Heart right ventricle (tissue), 16 donors: ENCODE measurements at regions of chr5 and their contacts with region 1.

Region 1: GRCh38 chr5:113606298-113607134 is 93.0 kb downstream of the YTHDC2 start:
- DNase-seq: peak in 1 of 2 donors; percentile 53
- ATAC-seq: peak; percentile 85 to 93 (median 90)
- H3K4me3 ChIP-seq: peak overlapping the region in 3 of 10 donors; percentile 4 to 28 (median 7)
- H3K27ac ChIP-seq: no peak overlapping the region
- H3K4me1 ChIP-seq: peaks cover 0 to 10% (median 3%) of the 10 kb centered on the region in 9 donors
- H3K27me3 ChIP-seq: peaks cover 0 to 6% (median 0%) of the 10 kb centered on the region in 7 donors
- CTCF ChIP-seq: peak; percentile 53 to 85 (median 76)

Region 2: DNA sequence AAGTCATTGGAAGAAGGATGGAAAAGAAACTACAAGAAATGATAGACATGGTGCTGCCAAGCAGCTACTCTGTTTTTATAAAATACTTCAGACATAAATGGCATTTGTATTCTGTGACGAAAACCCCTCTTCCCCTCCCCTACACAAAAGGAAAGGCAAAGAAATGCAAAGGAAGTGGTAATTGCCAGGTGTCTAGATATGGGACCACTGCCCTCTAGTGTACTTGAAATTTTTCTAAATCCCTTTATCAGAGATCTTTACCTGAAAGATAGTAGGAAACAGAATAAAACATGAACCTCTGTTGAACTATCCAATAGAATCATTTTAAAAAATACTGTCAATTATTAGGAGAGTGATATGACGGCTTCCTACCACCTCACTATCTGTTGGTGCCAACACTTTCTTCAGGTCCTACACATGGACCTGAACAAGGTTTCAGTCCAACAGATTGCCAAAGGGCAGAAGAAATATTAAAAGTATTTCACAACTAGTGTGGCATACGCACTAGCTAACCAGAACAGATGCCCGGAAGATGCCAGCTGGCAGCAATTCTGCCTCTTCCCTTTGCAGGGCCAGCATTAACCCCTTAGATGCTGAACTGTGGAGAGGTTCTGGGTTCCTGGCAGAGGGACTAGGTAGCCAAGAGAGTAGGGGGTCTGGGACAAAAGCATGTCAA is 275.8 kb before region 1 on chr5:
- intact Hi-C with region 1: loop called in 6 of 10 experiments (anchors 5 to 10 kb)
- DNase-seq: peak; percentile 31 to 34
- ATAC-seq: peak; percentile 66 to 92 (median 74)
- H3K4me3 ChIP-seq: no peak overlapping the region
- H3K27ac ChIP-seq: peak overlapping the region in 1 of 10 donors; percentile 35
- H3K4me1 ChIP-seq: peaks cover 0 to 15% (median 9%) of the 10 kb centered on the region in 9 donors
- H3K27me3 ChIP-seq: no peaks in the 10 kb centered on the region
- CTCF ChIP-seq: peak; percentile 37 to 71 (median 51)

Region 3: GRCh38 chr5:113336975-113337374 is 269.5 kb before region 1 on chr5:
- intact Hi-C with region 1: loop called in 8 of 10 experiments (anchors 5 to 10 kb)
- DNase-seq: peak; percentile 20 to 54
- ATAC-seq: peak; percentile 74 to 90 (median 88)
- H3K4me3 ChIP-seq: no peak overlapping the region
- H3K27ac ChIP-seq: no peak overlapping the region
- H3K4me1 ChIP-seq: peaks cover 0 to 17% (median 0%) of the 10 kb centered on the region in 9 donors
- H3K27me3 ChIP-seq: no peaks in the 10 kb centered on the region
- CTCF ChIP-seq: peak; percentile 24 to 72 (median 61)

Region 4: DNA sequence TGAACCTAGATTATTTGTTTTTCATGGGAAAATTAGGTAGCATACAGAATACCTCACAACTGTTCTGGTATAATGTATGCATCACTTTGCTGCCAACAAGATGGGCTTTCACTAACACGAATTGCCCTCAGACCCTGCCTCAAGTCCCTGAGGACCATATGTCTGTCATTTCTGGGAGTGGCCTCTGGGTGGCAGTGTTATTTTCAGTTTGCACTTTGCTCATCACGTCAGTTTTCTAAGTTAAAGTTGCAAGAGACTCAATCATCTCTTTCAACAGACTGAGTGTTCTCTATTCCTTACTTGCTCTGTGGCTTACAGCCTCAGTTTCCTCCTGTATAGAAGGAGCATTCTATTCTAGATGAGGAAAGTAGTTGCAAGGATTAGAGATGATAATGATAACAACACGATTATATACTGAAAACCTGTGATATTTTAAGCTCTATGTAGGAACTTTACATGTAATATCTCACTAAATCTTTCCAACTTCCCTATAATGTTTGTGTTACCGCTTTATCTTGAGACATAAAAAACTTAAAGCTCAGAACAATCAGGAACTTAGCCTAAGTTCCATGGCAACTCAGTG is 227.5 kb before region 1 on chr5:
- intact Hi-C with region 1: loop called in 3 of 10 experiments (anchors 2 to 10 kb)
- DNase-seq: peak in 1 of 2 donors; percentile 57
- ATAC-seq: peak in 3 of 8 donors; percentile 46 to 71 (median 52)
- H3K4me3 ChIP-seq: no peak overlapping the region
- H3K27ac ChIP-seq: no peak overlapping the region
- H3K4me1 ChIP-seq: peaks cover 0 to 30% (median 0%) of the 10 kb centered on the region in 9 donors
- H3K27me3 ChIP-seq: peaks cover 0 to 29% (median 0%) of the 10 kb centered on the region in 7 donors
- CTCF ChIP-seq: peak; percentile 45 to 84 (median 76)

Region 5: DNA sequence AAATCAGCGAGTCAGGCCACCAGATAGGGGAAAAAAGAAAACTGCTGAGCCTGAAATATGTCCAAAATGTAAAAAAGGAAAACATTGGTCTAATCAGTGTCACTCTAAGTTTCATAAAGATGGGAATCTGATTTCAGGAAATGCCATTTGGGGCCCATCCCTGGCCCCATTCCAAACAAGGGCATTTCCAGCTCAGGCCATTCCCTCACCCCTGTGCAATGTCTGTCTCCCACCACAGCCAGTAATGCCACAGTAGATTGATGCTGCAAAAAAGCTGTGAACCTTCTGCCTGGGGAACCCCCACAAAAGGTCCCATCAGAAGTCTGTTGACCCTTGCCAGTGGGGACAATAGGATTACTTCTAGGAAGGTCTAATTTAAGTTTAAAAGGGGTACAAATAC is 106.5 kb after region 1 on chr5:
- intact Hi-C with region 1: no loop called
- DNase-seq: no peak
- ATAC-seq: no peak
- H3K4me3 ChIP-seq: no peak overlapping the region
- H3K27ac ChIP-seq: no peak overlapping the region
- H3K4me1 ChIP-seq: no peaks in the 10 kb centered on the region
- H3K27me3 ChIP-seq: no peaks in the 10 kb centered on the region
- CTCF ChIP-seq: no peak